HepG2 (cell line): ENCODE measurements at regions of chr15 and their contacts with region 1.

Region 1: DNA sequence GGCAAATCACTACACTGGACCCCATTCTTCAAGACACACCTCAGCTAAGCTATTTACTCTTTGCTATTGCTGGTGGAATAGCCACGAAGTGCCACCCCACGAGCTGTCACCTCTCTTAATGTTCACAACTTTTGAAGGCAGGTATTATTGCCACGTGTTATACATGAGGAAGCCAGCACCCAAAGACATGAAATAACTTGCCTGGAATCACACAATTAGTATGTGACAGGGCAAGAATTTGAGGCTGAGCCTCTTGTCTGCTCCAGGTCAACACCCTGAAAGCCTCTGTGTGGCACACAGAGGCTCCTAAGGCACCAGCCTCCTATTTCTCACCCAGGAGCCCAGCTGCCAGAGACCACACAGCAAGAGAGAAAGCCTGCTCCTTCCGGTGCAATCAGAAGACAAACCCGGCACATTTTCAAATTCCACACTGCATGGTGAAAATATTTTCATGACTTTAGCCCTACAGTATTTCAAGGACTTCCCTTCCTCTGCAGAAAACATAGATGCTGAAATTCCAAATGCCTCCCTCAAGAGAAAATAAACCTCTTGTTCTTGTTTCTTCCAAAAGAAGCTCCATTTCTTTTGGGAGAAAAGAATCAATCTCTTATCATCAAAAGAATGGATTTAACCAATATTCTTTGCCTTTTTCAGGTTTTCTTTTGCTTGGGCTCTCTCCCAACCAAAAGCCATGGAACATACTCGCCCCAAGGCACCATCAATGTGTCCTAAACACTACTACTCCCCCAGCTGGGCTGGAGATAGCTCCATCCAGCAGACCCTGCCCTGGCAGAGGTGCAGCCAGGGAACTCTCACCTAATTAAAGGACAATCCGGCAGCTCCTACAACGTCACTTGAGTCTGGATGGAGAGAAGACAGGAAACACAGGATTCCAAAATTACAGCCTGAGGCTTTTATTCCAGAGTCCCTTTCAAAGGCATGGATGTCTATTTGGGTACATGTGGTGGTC is 84.7 kb upstream of the THBS1 start:
- DNase-seq: no peak
- ATAC-seq: no peak
- H3K4me3 ChIP-seq: no peak overlapping the region
- H3K27ac ChIP-seq: no peak overlapping the region
- H3K4me1 ChIP-seq: no peaks in the 10 kb centered on the region
- H3K27me3 ChIP-seq: peaks cover 0 to 9% of the 10 kb centered on the region in 2 experiments; a peak in 2 of 5 replicates
- CTCF ChIP-seq: no peak
- EP300 ChIP-seq: no peak
- POLR2A ChIP-seq: no peak
- RAD21 ChIP-seq: no peak

Region 2: DNA sequence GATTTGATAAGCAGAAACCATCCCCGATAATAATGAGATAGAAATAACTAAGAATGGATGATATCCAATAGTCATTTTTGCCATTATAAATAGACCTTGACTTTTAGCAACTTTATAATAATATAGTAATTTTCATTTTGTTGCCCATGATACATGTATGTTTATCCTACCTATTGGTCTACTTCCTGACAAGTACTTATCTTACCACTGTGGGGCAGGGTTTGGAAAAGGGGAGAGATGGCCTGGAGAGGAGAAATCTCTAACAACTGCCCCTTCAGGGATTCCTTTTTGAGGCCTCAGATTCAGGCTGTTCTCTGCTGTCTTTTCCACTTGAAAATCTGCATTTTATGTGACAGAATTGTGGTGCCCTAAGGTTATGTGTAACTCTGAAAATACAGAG is 1000.0 kb before region 1 on chr15:
- CTCF ChIA-PET with region 1: no interaction called
- POLR2A ChIA-PET with region 1: no interaction called
- in situ Hi-C with region 1: no loop called
- intact Hi-C with region 1: no loop called
- DNase-seq: no peak
- ATAC-seq: no peak
- H3K4me3 ChIP-seq: no peak overlapping the region
- H3K27ac ChIP-seq: no peak overlapping the region
- H3K4me1 ChIP-seq: no peaks in the 10 kb centered on the region
- H3K27me3 ChIP-seq: no peaks in the 10 kb centered on the region
- CTCF ChIP-seq: no peak
- EP300 ChIP-seq: no peak
- POLR2A ChIP-seq: no peak
- RAD21 ChIP-seq: no peak

Region 3: GRCh38 chr15:39445931-39446330 is 50.2 kb before region 1 on chr15:
- CTCF ChIA-PET with region 1: no interaction called
- POLR2A ChIA-PET with region 1: no interaction called
- in situ Hi-C with region 1: no loop called
- intact Hi-C with region 1: loop called (anchors 1 kb)
- DNase-seq: no peak
- ATAC-seq: no peak
- H3K4me3 ChIP-seq: no peak overlapping the region
- H3K27ac ChIP-seq: no peak overlapping the region
- H3K4me1 ChIP-seq: peaks cover 31% of the 10 kb centered on the region
- H3K27me3 ChIP-seq: no peaks in the 10 kb centered on the region
- CTCF ChIP-seq: no peak
- EP300 ChIP-seq: no peak
- POLR2A ChIP-seq: no peak
- RAD21 ChIP-seq: no peak